Activated CD4-positive, alpha-beta T cell treated with anti-CD3 and anti-CD28 coated beads for 36 hours (primary cell): ENCODE measurements at regions of chr15 and their contacts with region 1.

Region 1: DNA sequence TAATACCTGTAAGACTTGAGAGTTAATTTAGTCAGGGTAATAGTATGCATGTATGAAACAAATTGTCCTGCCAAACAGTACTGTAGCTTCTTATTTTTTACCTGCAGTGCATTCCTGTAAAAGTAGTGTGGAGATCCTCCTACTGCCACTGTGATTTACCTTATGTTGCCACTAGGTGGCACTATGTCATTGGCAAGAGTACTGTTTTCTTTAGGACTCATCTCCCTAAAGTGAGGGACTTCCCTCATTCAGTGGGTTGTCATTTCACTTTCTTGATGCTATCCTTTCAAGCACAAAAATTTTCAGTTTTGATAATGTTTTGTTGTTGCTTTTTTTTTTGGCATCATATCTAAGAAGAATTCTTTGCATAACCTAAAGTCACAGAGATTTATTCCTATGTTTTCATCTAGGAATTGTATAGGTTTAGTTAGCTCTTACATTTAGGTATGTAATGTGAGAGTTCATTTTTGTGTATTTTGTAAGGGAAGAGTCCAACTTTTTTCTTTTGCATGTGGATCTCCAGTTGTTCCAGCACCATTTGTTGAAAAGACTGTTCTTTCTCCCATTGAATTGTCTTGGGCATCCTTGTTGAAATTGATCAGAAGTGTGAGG is 105.7 kb downstream of the AKAP13 start:
- DNase-seq: peak; percentile 74
- ATAC-seq: peak; percentile 92
- H3K4me3 Mint-ChIP-seq: no peak overlapping the region
- H3K27ac Mint-ChIP-seq: peak overlapping the region; percentile 23
- H3K4me1 Mint-ChIP-seq: peaks cover 73% of the 10 kb centered on the region
- H3K27me3 Mint-ChIP-seq: no peaks in the 10 kb centered on the region

Region 2: GRCh38 chr15:85296615-85297402 is 189.3 kb before region 1 on chr15:
- CTCF ChIA-PET with region 1: interaction called, 6 read pairs
- POLR2A ChIA-PET with region 1: no interaction called
- intact Hi-C with region 1: loop called (anchors 5 kb)
- DNase-seq: peak; percentile 79
- ATAC-seq: peak; percentile 100
- H3K4me3 Mint-ChIP-seq: no peak overlapping the region
- H3K27ac Mint-ChIP-seq: peak overlapping the region; percentile 38
- H3K4me1 Mint-ChIP-seq: peaks cover 11% of the 10 kb centered on the region
- H3K27me3 Mint-ChIP-seq: peaks cover 1% of the 10 kb centered on the region

Region 3: DNA sequence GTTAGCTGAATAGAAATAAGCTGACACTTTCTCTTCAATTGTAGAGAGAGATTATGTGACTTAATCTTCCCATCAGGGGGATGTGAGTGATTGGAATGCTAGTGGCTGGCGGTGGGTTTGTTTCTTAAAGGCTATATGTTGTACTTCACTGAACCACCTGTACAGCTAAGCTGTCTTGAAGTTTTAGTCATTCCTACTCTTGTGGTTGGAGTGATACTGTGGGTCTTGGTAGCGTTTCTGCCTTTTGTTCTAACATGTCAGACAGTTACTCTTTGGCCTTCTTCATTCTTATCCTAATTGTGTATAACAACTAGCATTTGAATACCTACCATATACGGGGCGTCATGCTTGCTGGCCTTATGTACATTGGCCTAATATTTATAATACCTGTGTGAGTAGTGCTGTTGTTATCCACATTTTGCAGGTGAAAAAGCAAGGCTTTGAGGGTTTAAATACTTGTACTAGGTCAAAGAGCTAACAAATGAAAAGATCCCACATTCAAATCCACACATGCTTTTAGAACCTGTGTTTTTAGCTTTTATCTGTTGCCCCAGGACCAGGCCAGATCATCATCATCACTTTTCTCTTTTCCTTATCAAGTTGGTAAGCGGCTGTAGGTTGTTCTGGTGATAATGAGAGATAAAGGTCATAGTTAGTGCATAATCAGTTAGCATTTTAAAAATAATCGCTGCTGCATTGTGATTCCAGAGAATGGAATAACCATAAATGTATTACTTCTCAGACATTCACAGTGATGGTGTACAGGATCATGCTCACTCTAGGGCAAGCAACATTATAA is 55.5 kb before region 1 on chr15:
- CTCF ChIA-PET with region 1: no interaction called
- POLR2A ChIA-PET with region 1: no interaction called
- intact Hi-C with region 1: no loop called
- DNase-seq: peak; percentile 25
- ATAC-seq: peak; percentile 99
- H3K4me3 Mint-ChIP-seq: no peak overlapping the region
- H3K27ac Mint-ChIP-seq: peak overlapping the region; percentile 41
- H3K4me1 Mint-ChIP-seq: peaks cover 50% of the 10 kb centered on the region
- H3K27me3 Mint-ChIP-seq: no peaks in the 10 kb centered on the region

Region 4: GRCh38 chr15:85618956-85619491 is 133.0 kb after region 1 on chr15:
- CTCF ChIA-PET with region 1: no interaction called
- POLR2A ChIA-PET with region 1: no interaction called
- intact Hi-C with region 1: loop called in 1 of 2 experiments (anchors 5 kb)
- DNase-seq: peak; percentile 78
- ATAC-seq: peak; percentile 90
- H3K4me3 Mint-ChIP-seq: no peak overlapping the region
- H3K27ac Mint-ChIP-seq: no peak overlapping the region
- H3K4me1 Mint-ChIP-seq: peaks cover 48% of the 10 kb centered on the region
- H3K27me3 Mint-ChIP-seq: no peaks in the 10 kb centered on the region

Region 5: DNA sequence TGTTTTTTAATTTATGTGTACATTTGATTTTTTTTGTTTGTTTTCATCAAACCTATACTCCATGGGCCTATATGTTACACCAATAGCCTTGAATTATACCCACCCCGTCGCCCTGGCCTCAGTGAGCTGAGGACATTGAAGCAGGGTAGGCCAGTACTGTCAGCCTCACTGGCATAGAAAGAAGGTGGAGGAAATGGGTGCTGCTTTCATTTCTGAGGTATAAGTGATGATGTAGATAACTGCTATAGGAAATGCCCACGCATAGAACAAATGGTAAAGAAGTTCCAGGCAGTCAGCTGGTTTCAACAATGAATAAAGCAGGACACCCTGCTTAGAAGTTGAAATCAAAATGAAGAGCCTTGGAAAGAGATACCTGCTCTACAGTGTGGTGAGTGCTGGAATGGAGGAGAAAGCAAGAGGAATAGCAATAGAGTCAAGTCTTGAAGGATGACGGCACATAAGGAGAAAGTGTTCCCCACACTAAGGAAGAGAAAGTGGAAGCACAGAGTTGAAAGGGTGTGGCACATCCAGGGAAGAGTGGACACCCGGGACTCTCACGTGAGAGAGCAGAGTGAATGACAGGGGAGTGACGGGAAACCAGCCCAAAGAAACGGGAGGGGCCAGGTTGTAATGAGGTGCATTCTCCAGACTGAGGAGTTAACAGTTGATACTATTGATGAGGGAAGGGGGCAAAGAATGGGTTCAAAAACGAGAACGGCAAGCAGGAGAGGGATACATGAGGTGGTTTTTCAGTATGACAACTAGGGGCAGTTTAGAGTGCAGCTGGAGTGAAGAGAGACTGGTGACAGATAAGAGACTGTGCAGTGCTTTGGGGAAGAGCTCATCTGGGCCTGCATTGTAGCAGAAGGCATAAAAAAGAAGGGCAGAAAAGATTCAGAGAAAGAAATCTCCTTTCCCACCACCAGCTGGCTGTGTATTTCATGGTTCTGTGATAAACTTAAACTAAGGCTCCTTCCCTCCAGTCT is 238.2 kb after region 1 on chr15:
- CTCF ChIA-PET with region 1: interaction called, 4 read pairs
- POLR2A ChIA-PET with region 1: no interaction called
- intact Hi-C with region 1: loop called (anchors 2 to 5 kb)
- DNase-seq: peak; percentile 45
- ATAC-seq: peak; percentile 82
- H3K4me3 Mint-ChIP-seq: peak overlapping the region; percentile 50
- H3K27ac Mint-ChIP-seq: peak overlapping the region; percentile 98
- H3K4me1 Mint-ChIP-seq: peaks cover 68% of the 10 kb centered on the region
- H3K27me3 Mint-ChIP-seq: no peaks in the 10 kb centered on the region

Region 6: DNA sequence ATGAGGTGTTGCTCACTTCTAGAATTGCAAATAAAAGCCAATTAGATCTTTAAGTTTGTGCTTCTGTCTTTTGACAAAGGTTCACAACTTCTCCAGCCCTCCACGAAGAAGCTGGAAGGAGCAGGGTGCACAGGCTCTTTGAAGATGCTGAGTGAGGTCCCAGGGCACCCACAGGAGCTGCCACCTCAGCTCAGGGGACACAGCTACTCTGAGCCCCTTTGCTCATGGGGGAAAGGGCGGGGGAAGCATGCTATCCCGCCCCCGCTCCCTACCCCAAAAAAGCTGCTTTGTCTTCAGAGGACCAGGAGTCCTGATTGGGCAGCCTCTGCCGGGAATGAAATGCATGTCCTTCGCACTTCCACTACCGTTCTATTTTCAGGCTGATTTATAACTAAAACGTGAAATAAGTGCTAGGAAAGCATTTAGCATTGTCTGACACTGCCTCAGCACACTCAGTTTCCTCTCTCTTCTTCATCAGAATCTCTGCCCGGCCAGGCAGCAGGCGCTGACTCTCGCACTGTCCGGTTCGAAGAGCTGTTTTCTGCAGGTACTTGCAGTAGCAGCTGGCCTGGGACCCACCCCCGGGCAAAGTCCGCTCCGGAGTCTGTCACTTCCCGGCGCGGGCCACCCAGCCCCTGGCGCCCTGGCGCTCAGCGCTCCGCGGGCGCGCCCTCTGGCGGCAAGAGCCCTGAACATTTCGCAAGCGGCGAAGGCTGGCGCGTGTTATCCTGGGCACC is 354.2 kb after region 1 on chr15:
- CTCF ChIA-PET with region 1: interaction called, 11 read pairs
- POLR2A ChIA-PET with region 1: no interaction called
- intact Hi-C with region 1: loop called (anchors 1 kb)
- DNase-seq: peak; percentile 89
- ATAC-seq: peak; percentile 97
- H3K4me3 Mint-ChIP-seq: peak overlapping the region; percentile 44
- H3K27ac Mint-ChIP-seq: no peak overlapping the region
- H3K4me1 Mint-ChIP-seq: no peaks in the 10 kb centered on the region
- H3K27me3 Mint-ChIP-seq: peaks cover 5% of the 10 kb centered on the region